ENCODE measurements at regions of chr15 and their contacts with region 1.

Region 1: GRCh38 chr15:93087825-93088199 is 1.2 kb downstream of the RGMA start:
- DNase-seq: peak; percentile 81
- ATAC-seq: peak; percentile 69
- H3K4me3 Mint-ChIP-seq: peak overlapping the region; percentile 66
- H3K27ac Mint-ChIP-seq: no peak overlapping the region
- H3K4me1 Mint-ChIP-seq: peaks cover 16% of the 10 kb centered on the region
- H3K27me3 Mint-ChIP-seq: peaks cover 63% of the 10 kb centered on the region

Region 2: GRCh38 chr15:92831655-92832328 is 256.0 kb before region 1 on chr15:
- CTCF ChIA-PET with region 1: no interaction called
- POLR2A ChIA-PET with region 1: no interaction called
- DNase-seq: peak; percentile 94
- ATAC-seq: peak; percentile 99
- H3K4me3 Mint-ChIP-seq: peak overlapping the region; percentile 73
- H3K27ac Mint-ChIP-seq: peak overlapping the region; percentile 95
- H3K4me1 Mint-ChIP-seq: peaks cover 56% of the 10 kb centered on the region
- H3K27me3 Mint-ChIP-seq: no peaks in the 10 kb centered on the region

Region 3: GRCh38 chr15:93018580-93018979 is 69.2 kb before region 1 on chr15:
- CTCF ChIA-PET with region 1: no interaction called
- POLR2A ChIA-PET with region 1: no interaction called
- DNase-seq: no peak
- ATAC-seq: no peak
- H3K4me3 Mint-ChIP-seq: no peak overlapping the region
- H3K27ac Mint-ChIP-seq: no peak overlapping the region
- H3K4me1 Mint-ChIP-seq: peaks cover 36% of the 10 kb centered on the region
- H3K27me3 Mint-ChIP-seq: no peaks in the 10 kb centered on the region

Region 4: DNA sequence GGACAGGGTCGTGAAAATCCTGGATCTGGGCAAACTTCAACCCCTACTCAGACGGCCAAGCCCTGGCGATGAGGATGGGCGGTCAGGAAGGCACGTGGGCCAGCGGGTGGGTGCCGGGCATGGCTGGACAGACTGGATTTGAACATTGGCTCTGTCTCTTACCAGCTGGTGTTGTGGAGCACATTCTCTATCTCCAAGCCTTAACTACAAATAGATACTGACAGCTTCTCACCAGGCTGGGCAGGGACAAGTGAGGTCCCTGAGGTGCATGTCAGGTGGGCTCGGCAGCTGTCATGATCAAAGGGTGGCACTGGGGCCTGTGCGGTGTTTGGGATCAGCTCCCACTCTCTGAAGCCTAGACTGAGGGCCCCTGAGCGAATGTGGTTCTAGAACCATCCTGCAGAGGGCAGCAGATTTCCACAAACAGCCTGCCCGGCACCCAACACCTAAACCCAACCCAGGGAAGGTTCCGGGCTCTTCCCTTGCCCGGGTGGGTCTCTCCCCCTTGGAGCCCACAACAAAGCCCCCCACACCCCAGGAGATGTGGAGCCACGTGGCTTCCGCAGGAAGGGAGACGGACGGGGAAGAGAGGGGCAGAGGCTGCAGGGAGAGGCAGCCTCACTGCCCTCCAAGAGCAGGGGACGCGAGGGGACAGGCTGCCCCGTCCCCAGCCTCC is 57.2 kb before region 1 on chr15:
- CTCF ChIA-PET with region 1: interaction called, 11 read pairs
- POLR2A ChIA-PET with region 1: no interaction called
- DNase-seq: peak; percentile 77
- ATAC-seq: peak; percentile 85
- H3K4me3 Mint-ChIP-seq: no peak overlapping the region
- H3K27ac Mint-ChIP-seq: peak overlapping the region; percentile 33
- H3K4me1 Mint-ChIP-seq: peaks cover 20% of the 10 kb centered on the region
- H3K27me3 Mint-ChIP-seq: no peaks in the 10 kb centered on the region

Region 5: GRCh38 chr15:93072411-93073394 is 15.1 kb before region 1 on chr15:
- CTCF ChIA-PET with region 1: interaction called, 28 read pairs
- POLR2A ChIA-PET with region 1: interaction called, 3 read pairs
- DNase-seq: no peak
- ATAC-seq: peak; percentile 49
- H3K4me3 Mint-ChIP-seq: peak overlapping the region; percentile 30
- H3K27ac Mint-ChIP-seq: no peak overlapping the region
- H3K4me1 Mint-ChIP-seq: peaks cover 11% of the 10 kb centered on the region
- H3K27me3 Mint-ChIP-seq: peaks cover 55% of the 10 kb centered on the region

Region 6: GRCh38 chr15:93102211-93102610 is 14.4 kb after region 1 on chr15:
- CTCF ChIA-PET with region 1: interaction called, 19 read pairs
- POLR2A ChIA-PET with region 1: no interaction called
- DNase-seq: no peak
- ATAC-seq: no peak
- H3K4me3 Mint-ChIP-seq: no peak overlapping the region
- H3K27ac Mint-ChIP-seq: no peak overlapping the region
- H3K4me1 Mint-ChIP-seq: no peaks in the 10 kb centered on the region
- H3K27me3 Mint-ChIP-seq: peaks cover 6% of the 10 kb centered on the region

Region 7: DNA sequence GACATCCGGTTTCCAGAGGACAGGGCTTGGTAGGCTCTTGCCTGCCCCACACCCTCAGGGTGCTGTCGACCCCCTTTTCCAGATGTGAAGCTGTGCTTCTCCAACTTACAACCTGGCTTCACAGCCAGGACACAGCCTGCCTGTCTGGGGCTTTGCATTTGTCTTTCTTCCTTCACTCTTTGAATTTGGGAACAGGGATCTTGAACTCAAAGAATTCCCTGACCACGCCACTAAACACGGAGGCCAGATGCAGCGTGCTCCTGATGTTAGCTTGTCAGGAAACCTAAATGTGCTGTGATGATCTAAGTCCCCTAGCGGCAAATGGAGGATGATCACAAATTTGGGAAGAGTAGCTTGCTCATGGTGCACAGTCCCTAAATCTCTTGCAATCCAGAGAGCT is 246.0 kb after region 1 on chr15:
- CTCF ChIA-PET with region 1: interaction called, 12 read pairs
- POLR2A ChIA-PET with region 1: no interaction called
- DNase-seq: no peak
- ATAC-seq: no peak
- H3K4me3 Mint-ChIP-seq: no peak overlapping the region
- H3K27ac Mint-ChIP-seq: no peak overlapping the region
- H3K4me1 Mint-ChIP-seq: no peaks in the 10 kb centered on the region
- H3K27me3 Mint-ChIP-seq: peaks cover 26% of the 10 kb centered on the region

Region 8: GRCh38 chr15:94119923-94120775 is 1032.3 kb after region 1 on chr15:
- CTCF ChIA-PET with region 1: interaction called, 33 read pairs
- POLR2A ChIA-PET with region 1: no interaction called
- DNase-seq: peak; percentile 75
- ATAC-seq: peak; percentile 99
- H3K4me3 Mint-ChIP-seq: no peak overlapping the region
- H3K27ac Mint-ChIP-seq: no peak overlapping the region
- H3K4me1 Mint-ChIP-seq: no peaks in the 10 kb centered on the region
- H3K27me3 Mint-ChIP-seq: peaks cover 10% of the 10 kb centered on the region

Measured in activated CD8-positive, alpha-beta T cell treated with anti-CD3 and anti-CD28 coated beads, Interleukin-2, amount 10 ng/mL, durations not matched to agents 7 days and 5 days (primary cell).